ENCODE measurements at regions of chr7 and their contacts with region 1.

Region 1: DNA sequence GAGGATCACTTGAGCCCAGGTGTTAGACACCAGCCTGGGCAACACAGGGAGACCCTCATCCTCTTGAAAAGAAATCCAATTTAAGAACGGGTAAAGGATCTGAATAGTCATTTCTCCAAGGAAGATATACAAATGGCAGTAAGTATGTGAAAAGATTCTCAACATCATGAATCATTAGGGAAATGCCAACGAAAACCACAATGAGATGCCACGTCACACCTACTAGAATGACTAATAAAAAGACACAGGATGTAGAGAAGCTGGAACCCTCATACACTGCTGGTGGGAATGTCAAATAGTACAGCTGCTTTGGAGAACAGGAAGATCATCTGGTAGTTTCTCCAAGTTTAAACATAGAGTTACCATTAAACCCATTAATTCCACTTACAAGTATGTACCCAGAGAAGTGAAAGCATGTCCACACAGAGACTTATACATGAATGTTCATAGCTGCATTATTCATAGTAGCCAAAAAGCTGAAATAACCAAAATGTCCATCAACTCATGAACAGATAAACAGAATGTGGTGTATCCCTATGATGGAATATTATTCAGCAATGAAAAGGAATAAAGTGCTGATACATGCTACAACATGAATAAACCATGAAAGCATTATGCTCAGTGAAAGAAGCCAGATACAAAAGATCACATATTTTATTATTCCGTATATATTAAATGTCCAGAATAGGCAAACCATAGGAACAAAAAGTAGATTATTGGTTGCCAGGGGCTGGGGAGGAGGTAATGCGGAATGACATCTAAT is 13.1 kb upstream of the ZMIZ2 start:
- DNase-seq: peak; percentile 80
- ATAC-seq: peak; percentile 86
- H3K4me3 Mint-ChIP-seq: no peak overlapping the region
- H3K27ac Mint-ChIP-seq: peak overlapping the region; percentile 83
- H3K4me1 Mint-ChIP-seq: peaks cover 12% of the 10 kb centered on the region
- H3K27me3 Mint-ChIP-seq: no peaks in the 10 kb centered on the region
- CTCF ChIP-seq: no peak

Region 2: DNA sequence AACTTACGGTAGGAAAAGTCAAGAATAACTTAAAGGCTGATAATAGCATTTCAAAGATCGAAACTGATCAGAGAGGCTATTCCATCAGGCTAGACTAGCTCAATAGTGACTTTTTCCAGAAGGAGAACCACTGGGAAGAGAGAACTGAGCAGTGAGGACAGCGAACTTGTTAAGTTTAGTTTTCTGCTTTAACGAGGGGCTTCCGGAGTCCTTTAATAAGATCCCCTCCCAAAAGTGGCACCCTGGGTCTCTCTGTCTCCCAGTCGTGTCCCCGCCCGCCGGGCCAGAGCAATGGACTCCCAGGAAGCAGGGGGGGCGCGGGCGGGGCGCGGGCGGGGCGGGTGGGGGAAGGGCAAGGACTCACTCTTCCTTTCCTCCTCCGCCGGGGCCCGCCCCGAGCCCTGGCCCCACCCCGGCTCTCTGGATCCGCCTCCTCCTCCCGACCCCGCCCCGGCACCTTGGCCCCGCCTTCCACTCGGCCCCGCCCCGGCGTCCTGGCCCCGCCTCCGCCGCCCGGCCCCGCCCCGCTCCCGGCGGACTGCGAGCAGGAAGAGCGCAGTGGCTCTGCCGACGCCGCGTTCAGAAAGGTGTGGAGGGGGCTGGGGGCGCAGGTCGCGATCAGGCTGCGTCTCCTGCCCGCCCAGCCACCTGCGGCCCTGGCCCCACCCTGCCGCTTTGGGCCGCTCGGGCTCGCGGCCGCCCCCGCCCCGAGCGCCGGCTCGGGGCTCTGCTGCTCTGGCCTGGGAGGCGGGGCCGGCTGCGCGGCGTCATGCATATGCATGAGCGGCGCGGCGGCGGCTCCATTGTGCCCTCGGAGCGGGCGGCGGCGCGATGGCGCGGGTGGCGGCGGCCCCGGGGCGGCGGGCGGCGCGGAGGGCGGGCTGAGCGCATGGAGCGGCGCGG is 12.7 kb after region 1 on chr7 and contains the start of gene ZMIZ2:
- CTCF ChIA-PET with region 1: interaction called, 3 read pairs
- POLR2A ChIA-PET with region 1: interaction called, 13 read pairs
- intact Hi-C with region 1: no loop called
- DNase-seq: peak; percentile 92
- ATAC-seq: peak; percentile 93
- H3K4me3 Mint-ChIP-seq: peak within 1 kb of the TSS; percentile 83
- H3K27ac Mint-ChIP-seq: peak within 1 kb of the TSS; percentile 81
- H3K4me1 Mint-ChIP-seq: peaks cover 33% of the 10 kb centered on the region
- H3K27me3 Mint-ChIP-seq: no peaks in the 10 kb centered on the region
- CTCF ChIP-seq: no peak
- total RNA-seq, gene ZMIZ2: 131 to 134 TPM

Region 3: DNA sequence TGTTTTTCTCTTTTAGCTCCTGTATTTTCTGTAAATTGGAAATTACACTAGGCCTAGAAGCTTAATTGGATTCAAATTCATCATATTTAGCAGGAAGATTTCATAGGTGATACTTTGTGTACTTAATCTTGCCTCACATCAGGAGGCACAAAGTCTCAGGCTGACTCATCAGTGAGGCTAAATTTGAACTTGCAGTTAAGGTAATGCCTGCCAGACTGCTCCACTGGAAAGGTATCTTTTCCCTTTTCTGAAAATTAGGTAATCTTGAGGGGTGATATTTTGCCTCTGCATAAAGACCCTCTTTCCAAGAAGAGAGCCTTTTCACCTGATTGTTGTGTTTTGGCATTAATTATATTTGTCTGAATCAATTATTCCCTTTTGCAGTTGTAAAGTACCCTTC is 75.5 kb after region 1 on chr7:
- CTCF ChIA-PET with region 1: no interaction called
- POLR2A ChIA-PET with region 1: no interaction called
- intact Hi-C with region 1: no loop called
- DNase-seq: no peak
- ATAC-seq: no peak
- H3K4me3 Mint-ChIP-seq: no peak overlapping the region
- H3K27ac Mint-ChIP-seq: no peak overlapping the region
- H3K4me1 Mint-ChIP-seq: no peaks in the 10 kb centered on the region
- H3K27me3 Mint-ChIP-seq: no peaks in the 10 kb centered on the region
- CTCF ChIP-seq: no peak